Activated B cell treated with CpG ODN at 0.5 μM for 24 hours (primary cell): ENCODE measurements at regions of chr1 and their contacts with region 1.

Region 1: GRCh38 chr1:223845810-223846682 is at the start of gene TP53BP2:
- DNase-seq: peak; percentile 92
- ATAC-seq: peak; percentile 84
- H3K4me3 Mint-ChIP-seq: peak within 1 kb of the TSS; percentile 89
- H3K27ac Mint-ChIP-seq: peak within 1 kb of the TSS; percentile 96
- H3K4me1 Mint-ChIP-seq: peaks cover 36% of the 10 kb centered on the region
- H3K27me3 Mint-ChIP-seq: no peaks in the 10 kb centered on the region
- CTCF ChIP-seq: no peak
- total RNA-seq, gene TP53BP2: 50.4 and 52.9 TPM in 2 replicates

Region 2: DNA sequence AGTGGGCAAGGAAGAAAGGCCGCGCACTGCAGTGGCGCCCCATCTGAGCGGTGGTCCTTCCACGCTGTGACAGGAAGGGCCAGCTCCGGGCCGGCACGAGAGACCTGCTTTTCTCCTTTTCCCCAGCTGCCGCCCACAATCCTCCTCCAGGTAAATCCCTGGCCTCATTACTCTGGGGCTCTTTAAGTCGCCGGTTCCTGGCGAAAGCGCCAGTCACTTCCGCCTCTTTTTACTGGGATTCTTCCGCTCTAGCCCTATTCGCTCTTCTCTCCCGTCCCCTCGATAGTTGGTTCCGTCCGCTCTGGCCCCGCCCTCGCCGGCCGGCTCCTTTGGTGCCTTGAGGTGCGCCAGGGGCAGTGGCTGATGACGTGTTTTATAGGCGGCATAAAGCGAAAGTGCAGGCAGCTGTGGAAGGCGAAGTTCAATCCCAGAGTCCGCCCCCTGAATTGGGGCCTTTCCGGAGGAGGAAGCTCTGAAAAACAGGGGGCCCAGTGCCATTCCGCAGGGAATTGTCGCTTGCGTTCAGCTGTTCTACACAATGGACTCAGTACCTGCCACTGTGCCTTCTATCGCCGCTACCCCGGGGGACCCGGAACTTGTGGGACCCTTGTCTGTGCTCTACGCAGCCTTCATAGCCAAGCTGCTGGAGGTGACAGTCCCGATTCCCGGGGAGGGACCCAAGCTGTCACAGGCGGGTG is 1202.0 kb before region 1 on chr1:
- CTCF ChIA-PET with region 1: no interaction called
- POLR2A ChIA-PET with region 1: no interaction called
- intact Hi-C with region 1: loop called (anchors 5 kb)
- DNase-seq: peak; percentile 94
- ATAC-seq: peak; percentile 96
- H3K4me3 Mint-ChIP-seq: peak overlapping the region; percentile 100
- H3K27ac Mint-ChIP-seq: peak overlapping the region; percentile 99
- H3K4me1 Mint-ChIP-seq: peaks cover 25% of the 10 kb centered on the region
- H3K27me3 Mint-ChIP-seq: no peaks in the 10 kb centered on the region
- CTCF ChIP-seq: no peak

Region 3: DNA sequence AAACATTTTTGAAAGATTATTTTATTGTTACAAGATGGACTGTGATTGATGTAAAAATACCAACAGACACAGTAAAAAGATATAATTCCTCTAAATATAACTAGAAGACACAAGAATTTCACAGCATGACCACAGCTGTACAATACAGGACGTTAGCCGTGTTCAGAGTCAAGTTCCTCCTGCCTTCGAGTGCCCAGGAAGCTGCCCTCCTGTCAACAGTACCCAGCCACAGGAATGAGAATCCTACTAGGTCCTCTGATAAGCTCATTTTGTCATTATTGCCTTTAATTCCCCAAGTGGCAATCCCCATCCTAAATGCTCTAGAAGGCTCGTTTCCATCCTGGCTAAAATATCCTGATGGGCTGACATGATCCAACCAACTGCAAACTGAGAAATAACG is 150.1 kb before region 1 on chr1:
- CTCF ChIA-PET with region 1: no interaction called
- POLR2A ChIA-PET with region 1: interaction called, 3 read pairs
- intact Hi-C with region 1: loop called (anchors 5 kb)
- DNase-seq: no peak
- ATAC-seq: no peak
- H3K4me3 Mint-ChIP-seq: no peak overlapping the region
- H3K27ac Mint-ChIP-seq: no peak overlapping the region
- H3K4me1 Mint-ChIP-seq: peaks cover 6% of the 10 kb centered on the region
- H3K27me3 Mint-ChIP-seq: no peaks in the 10 kb centered on the region
- CTCF ChIP-seq: no peak

Region 4: GRCh38 chr1:223712194-223712849 is 133.7 kb before region 1 on chr1 and contains the start of gene CAPN2:
- CTCF ChIA-PET with region 1: no interaction called
- POLR2A ChIA-PET with region 1: interaction called, 3 read pairs
- intact Hi-C with region 1: loop called (anchors 5 kb)
- DNase-seq: peak; percentile 67
- ATAC-seq: peak; percentile 74
- H3K4me3 Mint-ChIP-seq: peak within 1 kb of the TSS; percentile 86
- H3K27ac Mint-ChIP-seq: peak within 1 kb of the TSS; percentile 72
- H3K4me1 Mint-ChIP-seq: peaks cover 49% of the 10 kb centered on the region
- H3K27me3 Mint-ChIP-seq: no peaks in the 10 kb centered on the region
- CTCF ChIP-seq: no peak
- total RNA-seq, gene CAPN2: 50.7 and 62.6 TPM in 2 replicates

Region 5: DNA sequence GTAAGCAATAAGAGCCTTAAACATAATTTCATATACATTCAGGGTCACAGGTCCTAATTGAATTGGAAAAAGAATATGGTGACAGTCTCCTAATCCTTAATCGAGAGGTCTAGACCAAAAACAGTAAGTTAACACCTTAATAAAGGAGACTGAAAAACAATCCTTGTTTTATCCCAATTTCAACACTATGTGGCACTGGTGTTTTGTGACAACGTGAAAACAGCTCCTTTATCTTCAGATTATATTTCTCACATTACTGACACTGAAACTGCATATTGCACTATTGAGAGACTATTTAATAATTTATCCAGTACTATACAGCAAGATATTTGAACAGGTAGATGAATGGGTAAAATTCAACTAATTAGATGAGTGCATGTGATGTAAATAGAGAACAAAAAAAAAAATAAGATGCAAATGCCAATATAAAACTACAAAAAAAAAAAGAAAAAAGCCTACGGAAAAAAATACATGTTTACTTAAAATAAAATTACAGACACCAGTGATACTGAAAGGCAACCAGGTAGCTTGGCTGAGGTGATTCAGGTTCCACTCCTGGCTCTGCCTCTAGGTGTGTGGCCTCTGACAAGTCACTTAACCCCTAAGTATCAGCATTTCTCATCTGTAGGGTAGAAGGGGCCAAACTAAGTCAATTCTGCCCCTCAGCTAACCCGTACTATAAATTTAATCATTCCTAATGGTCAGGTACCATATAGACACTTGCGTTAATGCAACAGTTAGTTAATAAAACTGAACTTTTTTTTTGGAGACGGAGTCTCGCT is 34.2 kb before region 1 on chr1:
- CTCF ChIA-PET with region 1: interaction called, 10 read pairs
- POLR2A ChIA-PET with region 1: interaction called, 4 read pairs
- intact Hi-C with region 1: loop called (anchors 2 kb)
- DNase-seq: no peak
- ATAC-seq: peak; percentile 42
- H3K4me3 Mint-ChIP-seq: no peak overlapping the region
- H3K27ac Mint-ChIP-seq: no peak overlapping the region
- H3K4me1 Mint-ChIP-seq: peaks cover 13% of the 10 kb centered on the region
- H3K27me3 Mint-ChIP-seq: no peaks in the 10 kb centered on the region
- CTCF ChIP-seq: no peak

Region 6: DNA sequence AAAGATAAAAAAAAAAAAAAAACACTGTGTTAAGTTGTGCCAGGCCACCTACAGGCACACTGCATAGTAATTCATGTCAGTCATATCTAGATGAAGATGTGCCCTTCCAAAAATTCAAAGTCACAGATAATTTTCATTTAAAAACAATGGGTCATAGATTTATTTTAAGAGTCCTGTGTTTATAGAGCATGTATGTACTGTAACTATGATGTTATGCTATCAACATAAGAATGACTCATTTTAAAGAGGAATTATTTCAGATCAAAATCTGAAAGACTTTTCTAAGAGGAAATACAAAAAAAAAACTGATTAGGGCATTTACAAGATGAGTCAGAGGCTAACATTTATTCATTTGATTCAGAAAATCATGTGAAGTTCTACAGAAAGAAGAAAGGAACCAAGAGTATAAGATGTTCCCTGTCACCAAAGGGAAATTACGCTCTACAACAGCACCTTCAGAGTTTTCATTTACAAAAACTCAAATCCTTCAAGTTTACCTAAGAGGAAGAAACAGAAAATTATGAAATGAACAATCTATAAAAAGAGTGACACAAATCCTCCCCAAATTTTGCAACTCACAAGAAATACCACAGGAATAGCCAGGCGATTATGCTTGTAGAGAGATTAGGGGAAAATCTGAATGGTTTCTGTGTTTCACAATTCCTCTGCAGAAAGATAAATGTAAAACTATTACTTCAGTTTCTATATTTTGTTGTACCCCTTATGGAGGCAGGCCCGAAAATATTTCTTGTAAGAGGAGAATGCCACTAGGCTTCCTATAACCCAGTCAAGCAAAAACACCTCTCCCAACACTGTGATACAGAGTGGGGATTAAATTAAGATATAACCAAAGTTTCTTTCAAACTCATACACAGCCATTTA is 14.1 kb before region 1 on chr1:
- CTCF ChIA-PET with region 1: interaction called, 4 read pairs
- POLR2A ChIA-PET with region 1: interaction called, 9 read pairs
- intact Hi-C with region 1: loop called (anchors 1 kb)
- DNase-seq: no peak
- ATAC-seq: peak; percentile 70
- H3K4me3 Mint-ChIP-seq: peak overlapping the region; percentile 57
- H3K27ac Mint-ChIP-seq: peak overlapping the region; percentile 87
- H3K4me1 Mint-ChIP-seq: peaks cover 11% of the 10 kb centered on the region
- H3K27me3 Mint-ChIP-seq: no peaks in the 10 kb centered on the region
- CTCF ChIP-seq: no peak

Region 7: GRCh38 chr1:224434691-224435317 is 588.8 kb after region 1 on chr1 and contains the start of gene WDR26:
- CTCF ChIA-PET with region 1: no interaction called
- POLR2A ChIA-PET with region 1: no interaction called
- intact Hi-C with region 1: loop called (anchors 10 kb)
- DNase-seq: peak; percentile 74
- ATAC-seq: peak; percentile 85
- H3K4me3 Mint-ChIP-seq: peak within 1 kb of the TSS; percentile 96
- H3K27ac Mint-ChIP-seq: peak within 1 kb of the TSS; percentile 97
- H3K4me1 Mint-ChIP-seq: peaks cover 47% of the 10 kb centered on the region
- H3K27me3 Mint-ChIP-seq: no peaks in the 10 kb centered on the region
- CTCF ChIP-seq: no peak
- total RNA-seq, gene WDR26: 75.3 and 91.3 TPM in 2 replicates

Region 8: DNA sequence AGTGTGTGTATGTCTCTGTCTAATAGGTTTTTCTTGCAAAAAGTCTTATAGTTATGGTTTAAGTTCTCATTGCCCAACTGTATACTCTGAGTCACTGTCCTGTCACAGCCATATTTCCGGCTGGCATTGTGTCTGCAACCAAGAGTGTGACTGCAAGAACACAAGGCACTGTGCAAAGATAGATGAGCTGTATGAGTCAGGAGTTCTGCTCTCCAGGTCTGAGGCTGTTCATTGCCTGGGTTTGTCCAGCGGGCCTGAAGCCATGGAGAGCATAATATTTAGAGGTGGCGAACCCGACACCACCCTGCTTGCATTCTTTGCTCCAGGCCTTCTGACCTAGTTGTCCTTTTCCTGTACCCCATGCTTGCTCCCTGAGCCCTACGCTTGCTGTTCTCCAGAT is 719.1 kb after region 1 on chr1:
- CTCF ChIA-PET with region 1: no interaction called
- POLR2A ChIA-PET with region 1: no interaction called
- intact Hi-C with region 1: no loop called
- DNase-seq: no peak
- ATAC-seq: no peak
- H3K4me3 Mint-ChIP-seq: no peak overlapping the region
- H3K27ac Mint-ChIP-seq: no peak overlapping the region
- H3K4me1 Mint-ChIP-seq: no peaks in the 10 kb centered on the region
- H3K27me3 Mint-ChIP-seq: peaks cover 1% of the 10 kb centered on the region
- CTCF ChIP-seq: no peak